H1 (cell line): ENCODE measurements at regions of chr12 and their contacts with region 1.

Region 1: GRCh38 chr12:119444456-119445044 is 110.0 kb downstream of the CCDC60 start:
- DNase-seq: peak; percentile 43 to 75
- H3K4me3 ChIP-seq: peak overlapping the region in 1 of 4 experiments; percentile 42; a peak in 2 of 8 replicates
- H3K27ac ChIP-seq: no peak overlapping the region
- H3K4me1 ChIP-seq: peaks cover 0 to 2% (median 0%) of the 10 kb centered on the region in 4 experiments; a peak in 1 of 7 replicates
- H3K27me3 ChIP-seq: no peaks in the 10 kb centered on the region
- CTCF ChIP-seq: peak; percentile 92 to 100 (median 100)
- EP300 ChIP-seq: no peak
- POLR2A ChIP-seq: no peak
- RAD21 ChIP-seq: peak; percentile 81 to 85

Region 2: DNA sequence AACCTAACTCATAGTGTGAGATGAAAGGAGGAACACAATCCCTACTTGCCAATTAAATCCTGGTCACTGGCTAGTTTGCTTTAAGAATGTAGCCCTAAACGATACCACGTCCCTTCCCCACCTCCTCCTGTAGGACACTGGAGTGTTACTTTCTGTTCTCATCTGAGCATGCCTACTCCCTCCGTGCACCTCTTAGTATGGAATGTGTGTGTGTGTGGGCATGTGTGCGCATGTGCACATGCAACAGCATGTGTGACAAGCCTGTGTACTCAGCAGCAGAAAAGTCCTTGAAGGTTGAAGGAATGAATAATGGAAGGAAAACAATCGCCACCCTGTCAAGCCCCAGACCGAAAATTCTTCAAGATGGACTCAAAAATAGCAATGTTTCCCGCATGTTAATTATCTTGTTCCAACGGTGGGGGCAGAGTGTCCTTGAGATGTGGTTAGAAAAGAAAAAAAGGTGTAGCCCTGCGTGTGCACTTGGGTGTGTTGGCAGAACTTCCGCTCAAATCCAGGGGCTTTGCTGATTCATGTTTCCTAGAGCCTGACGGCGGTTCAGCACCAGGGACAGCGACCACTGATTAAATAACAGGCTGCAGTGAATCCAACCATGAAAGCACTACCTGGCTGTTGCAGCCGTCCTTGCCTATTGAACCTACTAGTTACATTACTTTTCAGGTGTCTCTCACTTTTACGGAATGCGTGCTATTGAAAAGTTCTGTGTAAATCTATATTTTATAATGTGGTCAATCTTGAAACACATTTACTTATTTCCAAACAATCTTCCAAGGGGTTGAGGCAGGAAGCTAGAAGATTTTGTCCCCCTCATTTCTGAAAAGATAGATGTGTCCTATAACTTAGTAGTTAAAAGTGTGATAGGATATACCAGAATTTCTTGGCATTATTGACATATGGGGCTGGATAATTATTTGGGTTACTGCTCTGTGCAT is 383.4 kb before region 1 on chr12:
- CTCF ChIA-PET with region 1: no interaction called
- POLR2A ChIA-PET with region 1: no interaction called
- DNase-seq: peak; percentile 46 to 87
- H3K4me3 ChIP-seq: no peak overlapping the region
- H3K27ac ChIP-seq: no peak overlapping the region
- H3K4me1 ChIP-seq: peaks cover 0 to 3% (median 0%) of the 10 kb centered on the region in 4 experiments; a peak in 2 of 7 replicates
- H3K27me3 ChIP-seq: no peaks in the 10 kb centered on the region
- CTCF ChIP-seq: no peak
- EP300 ChIP-seq: no peak
- POLR2A ChIP-seq: no peak
- RAD21 ChIP-seq: peak in 1 of 2 experiments; percentile 26; a peak in 1 of 4 replicates

Region 3: GRCh38 chr12:119399301-119399700 is 45.2 kb before region 1 on chr12:
- CTCF ChIA-PET with region 1: no interaction called
- POLR2A ChIA-PET with region 1: no interaction called
- DNase-seq: no peak
- H3K4me3 ChIP-seq: no peak overlapping the region
- H3K27ac ChIP-seq: no peak overlapping the region
- H3K4me1 ChIP-seq: no peaks in the 10 kb centered on the region
- H3K27me3 ChIP-seq: no peaks in the 10 kb centered on the region
- CTCF ChIP-seq: no peak
- EP300 ChIP-seq: no peak
- POLR2A ChIP-seq: no peak
- RAD21 ChIP-seq: no peak

Region 4: GRCh38 chr12:119423285-119423684 is 21.3 kb before region 1 on chr12:
- CTCF ChIA-PET with region 1: interaction called, 16 read pairs
- POLR2A ChIA-PET with region 1: no interaction called
- DNase-seq: peak in 1 of 2 experiments; percentile 65
- H3K4me3 ChIP-seq: no peak overlapping the region
- H3K27ac ChIP-seq: no peak overlapping the region
- H3K4me1 ChIP-seq: no peaks in the 10 kb centered on the region
- H3K27me3 ChIP-seq: no peaks in the 10 kb centered on the region
- CTCF ChIP-seq: no peak
- EP300 ChIP-seq: no peak
- POLR2A ChIP-seq: peak; percentile 29 to 87
- RAD21 ChIP-seq: no peak

Region 5: GRCh38 chr12:119457287-119457686 is 12.7 kb after region 1 on chr12:
- CTCF ChIA-PET with region 1: interaction called, 47 read pairs
- POLR2A ChIA-PET with region 1: interaction called, 6 read pairs
- DNase-seq: no peak
- H3K4me3 ChIP-seq: no peak overlapping the region
- H3K27ac ChIP-seq: no peak overlapping the region
- H3K4me1 ChIP-seq: peaks cover 0 to 6% (median 0%) of the 10 kb centered on the region in 4 experiments; a peak in 1 of 7 replicates
- H3K27me3 ChIP-seq: peaks cover 0 to 2% (median 0%) of the 10 kb centered on the region in 4 experiments; a peak in 1 of 7 replicates
- CTCF ChIP-seq: no peak
- EP300 ChIP-seq: no peak
- POLR2A ChIP-seq: no peak
- RAD21 ChIP-seq: no peak

Region 6: DNA sequence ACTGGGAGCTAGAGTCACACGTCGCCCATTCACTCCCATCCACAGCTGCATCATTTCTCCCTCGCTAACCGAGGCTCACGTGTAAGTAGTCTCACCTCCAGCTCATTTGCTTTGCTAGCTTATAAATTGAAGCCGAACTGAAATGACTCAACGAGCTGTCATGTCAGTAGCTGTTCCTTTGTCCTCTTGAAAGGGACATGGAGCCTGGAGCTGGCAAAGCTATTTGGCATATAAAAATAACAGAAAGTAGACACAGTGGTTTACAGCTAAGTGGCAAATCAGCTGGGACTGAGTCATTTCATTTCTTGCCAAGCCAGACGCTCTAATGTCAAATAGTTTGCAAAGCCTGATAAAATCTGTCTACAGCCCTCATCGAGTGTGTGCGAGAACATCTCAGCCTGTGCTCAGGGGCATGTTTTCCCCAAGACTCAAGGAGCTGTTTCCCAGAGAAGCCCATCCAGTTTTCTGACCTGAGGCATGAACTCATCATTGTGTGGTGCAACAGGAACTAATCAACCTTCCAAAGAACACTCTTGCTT is 34.6 kb after region 1 on chr12:
- CTCF ChIA-PET with region 1: interaction called, 21 read pairs
- POLR2A ChIA-PET with region 1: no interaction called
- DNase-seq: no peak
- H3K4me3 ChIP-seq: no peak overlapping the region
- H3K27ac ChIP-seq: no peak overlapping the region
- H3K4me1 ChIP-seq: no peaks in the 10 kb centered on the region
- H3K27me3 ChIP-seq: peaks cover 0 to 2% (median 0%) of the 10 kb centered on the region in 4 experiments; a peak in 1 of 7 replicates
- CTCF ChIP-seq: no peak
- EP300 ChIP-seq: no peak
- POLR2A ChIP-seq: no peak
- RAD21 ChIP-seq: no peak

Region 7: DNA sequence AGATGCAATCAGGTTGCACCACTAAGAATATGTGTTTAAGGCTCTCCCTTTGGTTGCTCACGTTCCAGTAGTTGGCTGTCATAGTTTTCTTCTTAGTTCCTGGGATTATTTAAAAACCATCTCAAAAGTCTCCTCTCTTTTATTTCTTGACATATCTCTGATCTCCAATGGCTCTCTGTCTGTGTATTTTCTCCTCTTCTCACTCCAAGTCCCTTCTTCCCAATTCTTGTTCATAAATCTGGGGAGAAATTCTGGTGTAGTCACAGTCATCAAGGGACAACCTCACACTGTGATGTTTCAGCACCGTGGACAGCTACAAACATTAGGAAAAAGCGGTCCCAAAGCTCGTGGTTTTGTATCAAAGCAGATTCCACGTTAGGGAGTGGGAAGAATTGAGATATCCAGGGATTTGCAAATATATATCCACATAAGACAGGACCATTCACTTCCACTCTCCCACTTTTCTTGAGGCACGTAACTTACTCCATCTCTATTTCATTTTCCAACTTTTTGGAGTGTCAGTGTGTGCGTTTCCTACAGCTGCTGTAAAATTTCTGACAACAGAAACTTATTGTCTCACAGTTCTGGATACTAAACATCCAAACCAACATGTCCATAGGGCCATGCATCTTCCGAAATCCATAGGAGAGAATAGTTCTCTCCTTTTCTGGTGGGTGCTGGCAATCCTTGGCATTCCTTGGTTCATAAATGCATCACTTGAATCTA is 68.4 kb after region 1 on chr12:
- CTCF ChIA-PET with region 1: interaction called, 11 read pairs
- POLR2A ChIA-PET with region 1: no interaction called
- DNase-seq: peak in 1 of 2 experiments; percentile 59
- H3K4me3 ChIP-seq: no peak overlapping the region
- H3K27ac ChIP-seq: no peak overlapping the region
- H3K4me1 ChIP-seq: no peaks in the 10 kb centered on the region; a peak in 1 of 7 replicates
- H3K27me3 ChIP-seq: no peaks in the 10 kb centered on the region
- CTCF ChIP-seq: no peak
- EP300 ChIP-seq: no peak
- POLR2A ChIP-seq: no peak
- RAD21 ChIP-seq: no peak

Region 8: GRCh38 chr12:119544765-119545625 is 100.4 kb after region 1 on chr12:
- CTCF ChIA-PET with region 1: interaction called, 141 read pairs
- POLR2A ChIA-PET with region 1: interaction called, 3 read pairs
- DNase-seq: peak; percentile 13 to 81
- H3K4me3 ChIP-seq: no peak overlapping the region
- H3K27ac ChIP-seq: no peak overlapping the region
- H3K4me1 ChIP-seq: no peaks in the 10 kb centered on the region
- H3K27me3 ChIP-seq: no peaks in the 10 kb centered on the region
- CTCF ChIP-seq: peak; percentile 49 to 93 (median 85)
- EP300 ChIP-seq: no peak
- POLR2A ChIP-seq: no peak
- RAD21 ChIP-seq: peak; percentile 96 to 98

Region 9: GRCh38 chr12:119649202-119649808 is 204.8 kb after region 1 on chr12:
- CTCF ChIA-PET with region 1: interaction called, 11 read pairs
- POLR2A ChIA-PET with region 1: no interaction called
- DNase-seq: no peak
- H3K4me3 ChIP-seq: no peak overlapping the region
- H3K27ac ChIP-seq: no peak overlapping the region
- H3K4me1 ChIP-seq: no peaks in the 10 kb centered on the region
- H3K27me3 ChIP-seq: no peaks in the 10 kb centered on the region
- CTCF ChIP-seq: peak in 2 of 3 experiments; percentile 50 to 74; a peak in 2 of 4 replicates
- EP300 ChIP-seq: no peak
- POLR2A ChIP-seq: no peak
- RAD21 ChIP-seq: peak; percentile 72

Region 10: GRCh38 chr12:119835068-119835467 is 390.5 kb after region 1 on chr12:
- CTCF ChIA-PET with region 1: no interaction called
- POLR2A ChIA-PET with region 1: no interaction called
- DNase-seq: no peak
- H3K4me3 ChIP-seq: no peak overlapping the region
- H3K27ac ChIP-seq: no peak overlapping the region
- H3K4me1 ChIP-seq: no peaks in the 10 kb centered on the region
- H3K27me3 ChIP-seq: no peaks in the 10 kb centered on the region
- CTCF ChIP-seq: peak; percentile 28 to 44 (median 29); a peak in 3 of 4 replicates
- EP300 ChIP-seq: no peak
- POLR2A ChIP-seq: no peak
- RAD21 ChIP-seq: peak in 1 of 2 experiments; percentile 19; a peak in 1 of 4 replicates